GM12878 (cell line): ENCODE measurements at regions of chr11 and their contacts with region 1.

Region 1: DNA sequence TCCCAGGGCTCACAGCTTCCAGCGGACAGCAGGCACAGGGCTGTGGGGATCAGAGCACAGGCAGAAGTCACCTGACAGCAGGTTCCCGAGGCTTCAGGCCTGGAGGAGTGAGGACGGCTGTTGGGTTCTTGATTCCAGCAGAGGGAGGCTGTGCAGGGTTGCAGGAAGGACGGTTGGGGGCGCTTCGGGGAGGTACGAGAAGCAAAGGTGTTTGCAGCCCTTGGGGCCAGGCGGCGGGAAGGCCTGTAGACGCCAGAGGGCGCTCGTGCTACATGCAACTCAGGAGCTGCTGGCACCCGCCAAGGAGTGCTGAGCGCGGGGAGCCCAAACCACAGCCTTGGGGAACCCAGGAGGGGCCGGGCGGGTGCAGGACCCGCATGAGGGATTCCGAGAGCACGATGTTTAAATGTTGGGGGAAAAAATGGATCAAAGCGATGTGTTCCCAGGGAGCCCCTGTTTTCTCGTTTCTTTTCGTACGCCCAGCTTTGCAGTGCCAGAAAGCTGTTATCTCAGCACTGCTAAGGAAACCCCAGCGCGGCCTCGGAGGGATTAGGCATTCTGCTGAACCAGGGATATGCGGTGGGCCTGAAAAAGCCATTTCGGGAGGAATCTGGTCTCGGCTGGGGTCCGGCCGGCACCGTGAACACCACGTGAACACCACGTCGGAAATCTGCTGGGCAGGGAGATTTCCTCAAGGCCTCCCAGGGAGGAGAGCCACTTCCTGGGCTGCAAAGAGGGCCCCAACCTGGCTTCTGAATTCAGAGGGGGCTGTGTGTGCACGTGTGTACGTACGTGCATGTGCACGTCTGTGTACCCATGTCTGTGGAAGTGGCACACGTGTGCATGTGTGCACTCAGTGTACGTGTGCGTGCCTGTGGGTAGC is 88.1 kb downstream of the KCNQ1 start:
- DNase-seq: peak; percentile 38
- ATAC-seq: peak; percentile 92
- H3K4me3 ChIP-seq: no peak overlapping the region
- H3K27ac ChIP-seq: no peak overlapping the region
- H3K4me1 ChIP-seq: peaks cover 8% of the 10 kb centered on the region
- H3K27me3 ChIP-seq: peaks cover 1 to 3% of the 10 kb centered on the region in 2 experiments; a peak in 1 of 4 replicates
- CTCF ChIP-seq: peak; percentile 94 to 98 (median 98)
- EP300 ChIP-seq: no peak
- POLR2A ChIP-seq: no peak
- RAD21 ChIP-seq: peak; percentile 93

Region 2: GRCh38 chr11:2196970-2197770 is 335.8 kb before region 1 on chr11:
- CTCF ChIA-PET with region 1: no interaction called
- POLR2A ChIA-PET with region 1: no interaction called
- RAD21 ChIA-PET with region 1: no interaction called
- SMC1A ChIA-PET with region 1: no interaction called
- in situ Hi-C with region 1: no loop called
- intact Hi-C with region 1: loop called (anchors 10 kb)
- DNase-seq: no peak
- ATAC-seq: peak; percentile 95
- H3K4me3 ChIP-seq: no peak overlapping the region
- H3K27ac ChIP-seq: no peak overlapping the region
- H3K4me1 ChIP-seq: no peaks in the 10 kb centered on the region
- H3K27me3 ChIP-seq: no peaks in the 10 kb centered on the region; a peak in 1 of 4 replicates
- CTCF ChIP-seq: peak; percentile 78 to 86 (median 85)
- EP300 ChIP-seq: no peak
- POLR2A ChIP-seq: no peak
- RAD21 ChIP-seq: peak; percentile 87

Region 3: DNA sequence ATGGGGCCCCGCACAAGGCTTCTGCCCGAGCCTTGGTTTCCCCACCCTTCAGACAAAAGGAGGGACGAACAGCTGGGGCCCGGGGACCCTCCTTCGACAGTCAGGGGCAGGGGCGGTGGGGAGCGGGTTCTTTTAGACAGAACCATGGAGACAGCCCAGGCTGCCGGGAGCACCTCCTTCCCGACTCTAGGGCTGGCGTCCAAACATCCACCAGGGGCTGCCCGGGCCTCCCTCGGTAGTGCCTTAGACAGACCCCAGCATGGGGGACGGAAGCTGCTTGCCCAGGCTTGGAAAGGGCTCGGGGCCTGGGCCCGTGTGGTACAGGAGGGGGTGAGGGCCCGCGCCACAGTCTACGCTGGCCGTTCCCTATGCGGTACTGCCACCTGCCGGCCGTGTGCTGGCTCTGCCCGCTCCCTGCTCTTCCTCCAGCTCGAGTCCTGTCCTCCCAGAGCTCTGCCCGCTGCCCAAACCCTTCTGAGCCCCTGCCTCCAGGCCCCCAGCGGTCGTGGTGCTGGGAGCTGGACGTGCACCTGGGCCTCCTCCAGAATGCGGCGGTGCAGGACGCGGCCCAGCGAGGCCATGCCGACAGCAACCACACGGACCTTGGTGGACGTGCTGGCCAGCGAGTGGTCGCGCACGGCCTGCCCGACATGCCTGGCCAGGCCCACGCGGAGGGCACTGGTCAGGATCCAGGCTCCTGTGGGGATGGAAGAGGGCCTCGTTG is 112.3 kb before region 1 on chr11:
- CTCF ChIA-PET with region 1: interaction called, 12 read pairs
- POLR2A ChIA-PET with region 1: no interaction called
- RAD21 ChIA-PET with region 1: interaction called, 5 read pairs
- SMC1A ChIA-PET with region 1: interaction called, 3 read pairs
- in situ Hi-C with region 1: loop called (anchors 5 kb)
- intact Hi-C with region 1: no loop called
- DNase-seq: no peak
- ATAC-seq: peak; percentile 98
- H3K4me3 ChIP-seq: no peak overlapping the region
- H3K27ac ChIP-seq: no peak overlapping the region
- H3K4me1 ChIP-seq: no peaks in the 10 kb centered on the region
- H3K27me3 ChIP-seq: no peaks in the 10 kb centered on the region
- CTCF ChIP-seq: peak; percentile 75 to 94 (median 93)
- EP300 ChIP-seq: no peak
- POLR2A ChIP-seq: no peak
- RAD21 ChIP-seq: peak; percentile 85

Region 4: GRCh38 chr11:2699531-2700414 is 166.8 kb after region 1 on chr11 and contains the start of gene KCNQ1OT1:
- CTCF ChIA-PET with region 1: interaction called, 3 read pairs
- POLR2A ChIA-PET with region 1: no interaction called
- RAD21 ChIA-PET with region 1: interaction called, 4 read pairs
- SMC1A ChIA-PET with region 1: no interaction called
- in situ Hi-C with region 1: no loop called
- intact Hi-C with region 1: loop called (anchors 2 kb)
- DNase-seq: peak; percentile 86
- ATAC-seq: peak; percentile 94
- H3K4me3 ChIP-seq: peak within 1 kb of the TSS; percentile 73
- H3K27ac ChIP-seq: peak within 1 kb of the TSS; percentile 82
- H3K4me1 ChIP-seq: no peaks in the 10 kb centered on the region; the same call in 1 of the 2 replicates
- H3K27me3 ChIP-seq: no peaks in the 10 kb centered on the region; a peak in 1 of 4 replicates
- CTCF ChIP-seq: no peak
- EP300 ChIP-seq: no peak
- POLR2A ChIP-seq: peak; percentile 100
- RAD21 ChIP-seq: no peak
- polyA plus RNA-seq, gene KCNQ1OT1: 0.02 to 0.13 TPM

Region 5: GRCh38 chr11:2885676-2886081 is 352.7 kb after region 1 on chr11 and contains the start of gene CDKN1C:
- CTCF ChIA-PET with region 1: interaction called, 233 read pairs
- POLR2A ChIA-PET with region 1: interaction called, 3 read pairs
- RAD21 ChIA-PET with region 1: interaction called, 151 read pairs
- SMC1A ChIA-PET with region 1: interaction called, 108 read pairs
- in situ Hi-C with region 1: loop called (anchors 5 kb)
- intact Hi-C with region 1: loop called (anchors 1 kb)
- DNase-seq: no peak
- ATAC-seq: peak; percentile 88
- H3K4me3 ChIP-seq: peak within 1 kb of the TSS; percentile 59; the same call in 1 of the 2 replicates
- H3K27ac ChIP-seq: no peak within 1 kb of the TSS
- H3K4me1 ChIP-seq: peaks cover 5% of the 10 kb centered on the region
- H3K27me3 ChIP-seq: peaks cover 9 to 10% of the 10 kb centered on the region in 2 experiments; a peak in 3 of 4 replicates
- CTCF ChIP-seq: no peak
- EP300 ChIP-seq: no peak
- POLR2A ChIP-seq: peak; percentile 66
- RAD21 ChIP-seq: no peak
- polyA plus RNA-seq, gene CDKN1C: not detected

Region 6: GRCh38 chr11:2930704-2931428 is 397.9 kb after region 1 on chr11:
- CTCF ChIA-PET with region 1: interaction called, 5 read pairs
- POLR2A ChIA-PET with region 1: no interaction called
- RAD21 ChIA-PET with region 1: interaction called, 13 read pairs
- SMC1A ChIA-PET with region 1: interaction called, 4 read pairs
- in situ Hi-C with region 1: no loop called
- intact Hi-C with region 1: loop called (anchors 2 kb)
- DNase-seq: peak; percentile 16
- ATAC-seq: peak; percentile 61
- H3K4me3 ChIP-seq: peak overlapping the region; percentile 62; the same call in 1 of the 2 replicates
- H3K27ac ChIP-seq: no peak overlapping the region
- H3K4me1 ChIP-seq: peaks cover 21% of the 10 kb centered on the region
- H3K27me3 ChIP-seq: peaks cover 3 to 15% of the 10 kb centered on the region in 2 experiments
- CTCF ChIP-seq: peak; percentile 48 to 89 (median 86)
- EP300 ChIP-seq: no peak
- POLR2A ChIP-seq: no peak
- RAD21 ChIP-seq: peak; percentile 62